GM12878 (cell line): ENCODE measurements at regions of chr4 and their contacts with region 1.

Region 1: DNA sequence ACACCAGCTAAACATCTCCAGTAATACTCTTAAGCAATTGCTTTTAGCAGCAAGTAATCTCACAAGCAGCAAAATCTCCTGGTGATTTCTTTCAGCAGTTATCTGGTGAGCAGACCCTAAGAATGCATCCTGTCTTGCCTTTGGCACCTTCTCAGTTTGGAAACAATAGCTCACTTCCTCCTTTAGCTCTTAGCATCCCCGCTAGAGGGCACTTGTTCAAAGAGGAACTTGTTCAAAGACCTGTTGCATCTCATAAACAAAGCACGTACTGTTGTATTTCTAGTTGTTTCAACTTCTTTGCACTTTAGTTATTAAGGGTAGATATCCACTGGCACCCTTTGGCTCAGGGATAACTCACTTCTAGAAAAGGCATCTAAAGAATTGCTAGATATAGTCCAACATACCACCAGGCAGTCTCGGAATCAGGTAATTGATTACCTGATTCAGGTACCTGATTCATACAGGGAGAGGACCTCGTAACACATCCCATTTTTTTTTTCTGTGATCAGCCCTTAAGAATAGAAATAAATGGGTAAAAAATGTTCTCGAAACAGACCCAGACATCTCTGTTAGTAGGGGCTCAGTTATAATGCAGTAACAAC is 81.9 kb upstream of the QRFPR start:
- DNase-seq: no peak
- ATAC-seq: peak; percentile 95
- H3K4me3 ChIP-seq: no peak overlapping the region
- H3K27ac ChIP-seq: no peak overlapping the region
- H3K4me1 ChIP-seq: no peaks in the 10 kb centered on the region
- H3K27me3 ChIP-seq: no peaks in the 10 kb centered on the region; a peak in 1 of 4 replicates
- CTCF ChIP-seq: peak; percentile 76 to 84 (median 77)
- EP300 ChIP-seq: no peak
- POLR2A ChIP-seq: no peak
- RAD21 ChIP-seq: peak; percentile 72

Region 2: DNA sequence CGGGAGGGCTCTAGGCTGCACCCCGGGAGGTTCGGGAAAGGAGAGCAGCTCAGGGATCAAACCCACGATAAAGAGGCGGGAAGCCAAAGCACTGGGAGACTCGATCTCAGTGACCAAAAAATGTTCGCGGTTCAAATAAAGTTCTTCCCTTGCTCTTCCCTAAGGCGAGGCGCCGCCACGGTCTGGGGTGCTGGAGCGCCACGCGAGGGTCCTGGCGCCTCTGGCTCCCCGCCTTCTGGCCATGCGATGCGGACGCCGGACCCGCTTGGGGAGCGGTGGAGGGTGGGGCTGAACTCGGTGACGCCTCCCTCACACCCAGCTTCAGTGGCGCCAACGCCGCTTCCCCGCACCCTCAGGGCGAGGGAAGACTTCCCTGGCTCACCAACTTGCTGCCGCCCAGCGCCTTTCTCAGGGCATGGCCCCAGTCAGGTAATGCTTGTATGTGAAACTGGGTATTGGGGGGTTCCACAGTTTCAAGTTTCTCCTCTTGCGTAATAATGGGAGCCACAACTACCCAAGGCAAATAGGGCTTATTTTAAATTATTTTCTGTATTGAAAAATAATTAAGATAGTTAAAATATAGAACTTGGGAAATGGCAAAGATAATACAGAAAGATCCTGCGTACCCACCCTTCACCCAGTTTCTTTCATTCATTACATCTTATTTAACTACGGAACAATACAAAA is 81.8 kb before region 1 on chr4 and contains the start of gene QRFPR:
- CTCF ChIA-PET with region 1: no interaction called
- POLR2A ChIA-PET with region 1: no interaction called
- RAD21 ChIA-PET with region 1: no interaction called
- SMC1A ChIA-PET with region 1: no interaction called
- in situ Hi-C with region 1: no loop called
- intact Hi-C with region 1: no loop called
- DNase-seq: no peak
- ATAC-seq: no peak
- H3K4me3 ChIP-seq: no peak within 1 kb of the TSS
- H3K27ac ChIP-seq: no peak within 1 kb of the TSS
- H3K4me1 ChIP-seq: no peaks in the 10 kb centered on the region
- H3K27me3 ChIP-seq: peaks cover 3 to 12% of the 10 kb centered on the region in 2 experiments
- CTCF ChIP-seq: no peak
- EP300 ChIP-seq: no peak
- POLR2A ChIP-seq: no peak
- RAD21 ChIP-seq: no peak
- polyA plus RNA-seq, gene QRFPR: not detected

Region 3: GRCh38 chr4:121451310-121451709 is 11.5 kb before region 1 on chr4:
- CTCF ChIA-PET with region 1: interaction called, 17 read pairs
- POLR2A ChIA-PET with region 1: no interaction called
- RAD21 ChIA-PET with region 1: no interaction called
- SMC1A ChIA-PET with region 1: no interaction called
- in situ Hi-C with region 1: no loop called
- intact Hi-C with region 1: no loop called
- DNase-seq: no peak
- ATAC-seq: no peak
- H3K4me3 ChIP-seq: no peak overlapping the region
- H3K27ac ChIP-seq: no peak overlapping the region
- H3K4me1 ChIP-seq: no peaks in the 10 kb centered on the region
- H3K27me3 ChIP-seq: no peaks in the 10 kb centered on the region; a peak in 1 of 4 replicates
- CTCF ChIP-seq: no peak
- EP300 ChIP-seq: no peak
- POLR2A ChIP-seq: no peak
- RAD21 ChIP-seq: no peak

Region 4: DNA sequence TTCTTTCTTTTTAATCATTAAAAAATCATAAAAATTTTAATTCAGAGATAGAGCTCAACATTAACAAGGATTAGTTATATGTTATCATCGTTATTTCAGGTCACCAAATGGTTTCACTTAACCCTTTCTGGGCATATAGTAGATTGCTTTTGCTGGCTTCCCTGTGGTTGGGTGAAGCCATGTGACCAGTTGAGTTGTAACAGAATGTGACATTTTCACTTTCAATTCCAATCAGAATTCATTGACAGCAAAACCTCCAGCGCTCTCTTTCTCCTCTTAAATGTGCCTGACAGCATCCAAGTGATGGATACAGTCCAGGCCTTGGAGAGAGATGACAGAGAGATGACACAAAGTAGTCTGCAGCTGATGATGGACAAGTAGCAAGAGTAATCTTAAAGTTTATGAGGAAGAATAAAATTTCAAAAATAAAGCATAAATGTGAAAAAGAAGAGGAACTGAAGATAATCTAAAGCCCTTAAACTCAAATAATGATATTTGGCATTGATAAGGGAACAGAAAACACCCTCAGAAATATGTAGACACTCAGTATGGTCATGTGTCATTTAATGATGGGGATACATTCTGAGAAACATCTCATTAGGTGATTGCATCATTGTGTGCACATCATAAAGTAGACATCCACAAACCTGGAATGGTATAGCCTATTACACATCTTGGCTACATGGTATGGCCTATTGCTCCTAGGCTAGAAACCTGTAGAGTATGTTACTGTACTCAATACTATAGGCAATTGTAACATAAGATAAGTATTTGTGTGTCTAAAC is 10.4 kb after region 1 on chr4:
- CTCF ChIA-PET with region 1: interaction called, 19 read pairs
- POLR2A ChIA-PET with region 1: no interaction called
- RAD21 ChIA-PET with region 1: interaction called, 4 read pairs
- SMC1A ChIA-PET with region 1: interaction called, 7 read pairs
- in situ Hi-C with region 1: no loop called
- intact Hi-C with region 1: no loop called
- DNase-seq: no peak
- ATAC-seq: peak; percentile 87
- H3K4me3 ChIP-seq: no peak overlapping the region
- H3K27ac ChIP-seq: no peak overlapping the region
- H3K4me1 ChIP-seq: 0 out of 2 replicates have a peak, but pooled peaks cover 2% of the 10 kb centered on the region
- H3K27me3 ChIP-seq: no peaks in the 10 kb centered on the region
- CTCF ChIP-seq: no peak
- EP300 ChIP-seq: no peak
- POLR2A ChIP-seq: no peak
- RAD21 ChIP-seq: no peak

Region 5: GRCh38 chr4:121484633-121485032 is 21.9 kb after region 1 on chr4:
- CTCF ChIA-PET with region 1: interaction called, 13 read pairs
- POLR2A ChIA-PET with region 1: no interaction called
- RAD21 ChIA-PET with region 1: interaction called, 4 read pairs
- SMC1A ChIA-PET with region 1: interaction called, 4 read pairs
- in situ Hi-C with region 1: no loop called
- intact Hi-C with region 1: no loop called
- DNase-seq: no peak
- ATAC-seq: peak; percentile 97
- H3K4me3 ChIP-seq: no peak overlapping the region
- H3K27ac ChIP-seq: no peak overlapping the region
- H3K4me1 ChIP-seq: no peaks in the 10 kb centered on the region
- H3K27me3 ChIP-seq: no peaks in the 10 kb centered on the region
- CTCF ChIP-seq: peak; percentile 72 to 83 (median 81)
- EP300 ChIP-seq: no peak
- POLR2A ChIP-seq: no peak
- RAD21 ChIP-seq: peak; percentile 73

Region 6: GRCh38 chr4:121656269-121656641 is 193.5 kb after region 1 on chr4:
- CTCF ChIA-PET with region 1: interaction called, 37 read pairs
- POLR2A ChIA-PET with region 1: no interaction called
- RAD21 ChIA-PET with region 1: interaction called, 11 read pairs
- SMC1A ChIA-PET with region 1: interaction called, 9 read pairs
- in situ Hi-C with region 1: no loop called
- intact Hi-C with region 1: loop called (anchors 1 kb)
- DNase-seq: peak; percentile 7
- ATAC-seq: peak; percentile 79
- H3K4me3 ChIP-seq: no peak overlapping the region
- H3K27ac ChIP-seq: no peak overlapping the region
- H3K4me1 ChIP-seq: peaks cover 12% of the 10 kb centered on the region
- H3K27me3 ChIP-seq: no peaks in the 10 kb centered on the region
- CTCF ChIP-seq: peak; percentile 38 to 53 (median 49); a peak in 5 of 6 replicates
- EP300 ChIP-seq: no peak
- POLR2A ChIP-seq: no peak
- RAD21 ChIP-seq: peak; percentile 58

Region 7: GRCh38 chr4:121726642-121727268 is 264.0 kb after region 1 on chr4:
- CTCF ChIA-PET with region 1: interaction called, 4 read pairs
- POLR2A ChIA-PET with region 1: no interaction called
- RAD21 ChIA-PET with region 1: interaction called, 4 read pairs
- SMC1A ChIA-PET with region 1: no interaction called
- in situ Hi-C with region 1: no loop called
- intact Hi-C with region 1: loop called (anchors 1 kb)
- DNase-seq: peak; percentile 47
- ATAC-seq: peak; percentile 97
- H3K4me3 ChIP-seq: no peak overlapping the region
- H3K27ac ChIP-seq: no peak overlapping the region
- H3K4me1 ChIP-seq: peaks cover 11% of the 10 kb centered on the region
- H3K27me3 ChIP-seq: no peaks in the 10 kb centered on the region; a peak in 1 of 4 replicates
- CTCF ChIP-seq: peak; percentile 57 to 75 (median 68); a peak in 5 of 6 replicates
- EP300 ChIP-seq: no peak
- POLR2A ChIP-seq: no peak
- RAD21 ChIP-seq: peak; percentile 81

Region 8: DNA sequence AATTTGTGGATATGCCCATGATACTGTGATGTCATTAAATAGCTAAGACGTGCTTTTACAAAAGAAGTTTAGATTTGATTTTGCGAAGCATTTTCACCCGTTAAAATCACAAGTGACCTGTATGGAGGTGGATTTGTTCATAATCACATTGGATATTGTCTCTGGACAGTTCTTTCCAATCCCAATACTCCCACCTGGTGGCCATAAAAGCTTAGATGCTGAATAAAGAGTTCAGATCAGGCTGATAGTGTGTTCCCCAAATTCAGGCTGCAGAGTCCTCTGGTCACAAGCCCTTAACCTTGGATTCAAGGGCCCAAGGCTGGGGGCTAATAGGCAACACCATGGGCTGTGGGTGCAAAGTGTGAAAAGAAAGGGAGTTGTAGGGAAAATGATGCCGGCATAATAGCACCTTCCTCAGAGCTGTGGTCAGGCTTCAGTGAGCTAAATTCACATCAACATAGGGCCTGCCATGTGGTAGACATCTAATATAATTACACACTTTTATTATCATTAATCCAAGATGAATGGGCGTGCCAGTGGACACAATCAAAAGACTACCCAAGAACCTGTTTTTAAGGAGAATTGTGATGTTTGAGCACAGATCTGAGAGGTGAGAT is 274.1 kb after region 1 on chr4:
- CTCF ChIA-PET with region 1: interaction called, 16 read pairs
- POLR2A ChIA-PET with region 1: no interaction called
- RAD21 ChIA-PET with region 1: interaction called, 4 read pairs
- SMC1A ChIA-PET with region 1: interaction called, 4 read pairs
- in situ Hi-C with region 1: no loop called
- intact Hi-C with region 1: no loop called
- DNase-seq: no peak
- ATAC-seq: peak; percentile 80
- H3K4me3 ChIP-seq: no peak overlapping the region
- H3K27ac ChIP-seq: no peak overlapping the region
- H3K4me1 ChIP-seq: no peaks in the 10 kb centered on the region
- H3K27me3 ChIP-seq: no peaks in the 10 kb centered on the region; a peak in 1 of 4 replicates
- CTCF ChIP-seq: peak; percentile 33 to 53 (median 43); a peak in 4 of 6 replicates
- EP300 ChIP-seq: no peak
- POLR2A ChIP-seq: no peak
- RAD21 ChIP-seq: peak; percentile 56